Heart right ventricle (tissue), 16 donors: ENCODE measurements at regions of chr1 and their contacts with region 1.

Region 1: DNA sequence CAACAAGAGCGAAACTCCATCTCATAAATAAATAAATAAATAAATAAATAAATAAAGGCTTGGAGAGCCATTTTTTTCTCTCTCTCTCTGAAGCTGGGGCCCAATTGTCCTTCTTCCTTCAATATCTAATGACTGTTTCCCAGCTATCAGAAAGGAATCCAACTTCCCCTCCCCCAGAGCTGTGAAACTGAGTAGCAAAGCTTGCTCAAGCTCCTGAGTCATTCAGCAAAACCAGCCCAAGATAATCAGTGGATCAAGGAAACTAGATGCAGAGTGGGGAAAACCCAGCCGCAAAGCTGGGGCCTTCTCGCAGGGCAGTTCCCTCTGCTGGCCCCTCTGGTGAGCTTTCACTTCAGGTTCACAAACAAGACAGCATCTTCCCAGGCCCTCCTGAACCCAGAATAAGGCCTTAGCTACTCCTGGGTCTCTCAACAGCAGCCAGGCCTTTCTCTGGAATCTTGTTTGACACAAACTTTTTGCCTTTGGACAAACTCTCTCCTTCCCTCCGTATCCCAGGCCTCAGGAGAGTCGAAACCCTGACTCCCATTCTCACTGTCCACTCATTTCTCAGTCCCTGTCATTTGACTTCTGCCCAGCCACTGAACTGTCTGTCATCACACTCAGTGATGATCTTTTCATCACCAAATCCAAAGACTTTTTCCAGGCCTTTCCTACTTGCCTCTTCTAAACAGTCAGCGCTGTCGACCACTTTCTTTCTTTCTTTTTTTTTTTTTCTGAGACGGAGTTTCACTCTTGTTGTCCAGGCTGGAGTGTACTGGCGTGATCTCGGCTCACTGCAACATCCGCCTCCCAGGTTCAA is 18.0 kb upstream of the PTP4A2 start:
- DNase-seq: peak; percentile 54 to 83
- ATAC-seq: peak; percentile 1 to 74 (median 64)
- H3K4me3 ChIP-seq: peak overlapping the region in 1 of 10 donors; percentile 11
- H3K27ac ChIP-seq: peak overlapping the region; percentile 85 to 96 (median 94)
- H3K4me1 ChIP-seq: peaks cover 13 to 90% (median 37%) of the 10 kb centered on the region in 9 donors
- H3K27me3 ChIP-seq: no peaks in the 10 kb centered on the region
- CTCF ChIP-seq: peak in 5 of 9 donors; percentile 11 to 53 (median 44)

Region 2: GRCh38 chr1:31354283-31354682 is 601.8 kb before region 1 on chr1:
- intact Hi-C with region 1: no loop called
- DNase-seq: no peak
- ATAC-seq: no peak
- H3K4me3 ChIP-seq: no peak overlapping the region
- H3K27ac ChIP-seq: no peak overlapping the region
- H3K4me1 ChIP-seq: no peaks in the 10 kb centered on the region
- H3K27me3 ChIP-seq: no peaks in the 10 kb centered on the region
- CTCF ChIP-seq: no peak

Region 3: GRCh38 chr1:31663622-31664452 is 292.3 kb before region 1 on chr1:
- intact Hi-C with region 1: loop called in 4 of 10 experiments (anchors 10 kb)
- DNase-seq: peak; percentile 62 to 69
- ATAC-seq: peak in 7 of 8 donors; percentile 33 to 66 (median 52)
- H3K4me3 ChIP-seq: no peak overlapping the region
- H3K27ac ChIP-seq: no peak overlapping the region
- H3K4me1 ChIP-seq: peaks cover 6 to 26% (median 15%) of the 10 kb centered on the region in 9 donors
- H3K27me3 ChIP-seq: no peaks in the 10 kb centered on the region
- CTCF ChIP-seq: peak; percentile 83 to 92 (median 89)

Region 4: DNA sequence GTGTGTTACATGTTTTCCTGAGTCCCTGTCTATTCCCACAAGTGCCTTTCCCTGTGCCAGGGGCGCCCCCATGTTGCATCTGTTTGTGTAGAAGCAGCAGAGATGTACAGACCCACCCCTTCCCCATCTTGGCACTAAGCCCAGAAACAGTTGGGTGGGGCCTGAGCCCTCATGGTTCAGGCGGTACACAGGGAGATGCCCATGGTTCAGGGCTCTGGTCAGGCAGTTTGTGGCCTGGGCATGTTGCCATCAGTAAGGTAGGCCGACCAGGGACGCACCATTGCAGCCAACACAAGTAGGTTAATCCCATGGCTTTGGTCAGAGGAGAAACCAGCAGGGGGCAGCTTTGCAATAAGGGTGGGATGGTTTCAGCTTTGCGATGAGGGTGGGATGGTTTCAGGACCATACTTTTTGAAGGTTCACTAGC is 191.1 kb before region 1 on chr1:
- intact Hi-C with region 1: no loop called
- DNase-seq: no peak
- ATAC-seq: peak in 1 of 8 donors; percentile 4
- H3K4me3 ChIP-seq: no peak overlapping the region
- H3K27ac ChIP-seq: no peak overlapping the region
- H3K4me1 ChIP-seq: peaks cover 14 to 52% (median 38%) of the 10 kb centered on the region in 9 donors
- H3K27me3 ChIP-seq: peaks cover 0 to 87% (median 20%) of the 10 kb centered on the region in 7 donors
- CTCF ChIP-seq: peak in 7 of 9 donors; percentile 28 to 43 (median 34)

Region 5: GRCh38 chr1:31802190-31803150 is 153.7 kb before region 1 on chr1:
- intact Hi-C with region 1: loop called in 5 of 10 experiments (anchors 10 kb)
- DNase-seq: no peak
- ATAC-seq: no peak
- H3K4me3 ChIP-seq: peak overlapping the region in 6 of 10 donors; percentile 0 to 38 (median 20)
- H3K27ac ChIP-seq: peak overlapping the region in 1 of 10 donors; percentile 16
- H3K4me1 ChIP-seq: peaks cover 0 to 29% (median 0%) of the 10 kb centered on the region in 9 donors
- H3K27me3 ChIP-seq: peaks cover 0 to 17% (median 12%) of the 10 kb centered on the region in 7 donors
- CTCF ChIP-seq: no peak

Region 6: DNA sequence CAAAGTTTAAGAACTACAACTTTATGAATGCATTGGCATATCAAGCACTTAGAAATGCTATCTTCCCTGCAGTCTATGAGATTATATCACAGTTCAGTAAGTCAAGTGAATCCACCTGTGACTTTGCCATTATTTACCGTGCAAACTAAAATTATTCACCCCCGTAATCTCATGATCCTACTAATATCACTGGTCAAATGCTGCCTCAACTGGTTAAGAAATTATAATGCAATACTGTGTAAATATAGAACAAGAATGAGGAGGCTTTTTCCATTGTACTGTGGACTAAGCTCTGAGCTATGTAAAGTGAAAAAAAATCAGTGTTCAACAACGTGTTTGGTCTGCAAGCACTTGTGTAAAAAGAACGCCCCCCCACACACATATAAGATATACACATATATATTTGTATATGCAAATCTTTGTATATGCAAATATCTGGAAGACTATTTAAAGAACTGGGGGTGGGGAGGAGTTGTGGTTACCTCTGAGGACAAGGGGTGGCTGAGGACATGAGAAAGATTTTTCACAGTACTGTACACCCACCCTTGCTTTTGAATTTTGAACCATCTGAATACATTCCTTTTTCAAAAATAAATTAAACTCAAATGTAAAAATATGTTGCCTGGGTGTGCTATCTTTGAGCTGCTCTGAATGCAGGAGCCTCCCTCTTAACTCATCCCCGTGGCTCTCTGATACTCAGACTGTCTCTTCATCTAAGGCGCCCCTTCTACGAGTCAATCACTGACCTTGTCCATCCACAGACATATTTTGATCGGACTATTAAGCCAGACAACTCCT is 75.0 kb before region 1 on chr1:
- intact Hi-C with region 1: loop called in 1 of 10 experiments (anchors 10 kb)
- DNase-seq: no peak
- ATAC-seq: peak in 5 of 8 donors; percentile 28 to 68 (median 48)
- H3K4me3 ChIP-seq: no peak overlapping the region
- H3K27ac ChIP-seq: peak overlapping the region in 1 of 10 donors; percentile 53
- H3K4me1 ChIP-seq: peaks cover 0 to 19% (median 3%) of the 10 kb centered on the region in 9 donors
- H3K27me3 ChIP-seq: no peaks in the 10 kb centered on the region
- CTCF ChIP-seq: no peak

Region 7: GRCh38 chr1:31926853-31927660 is 29.1 kb before region 1 on chr1:
- intact Hi-C with region 1: loop called in 1 of 10 experiments (anchors 5 kb)
- DNase-seq: no peak
- ATAC-seq: peak in 1 of 8 donors; percentile 21
- H3K4me3 ChIP-seq: no peak overlapping the region
- H3K27ac ChIP-seq: peak overlapping the region in 5 of 10 donors; percentile 1 to 51 (median 8)
- H3K4me1 ChIP-seq: peaks cover 24 to 98% (median 96%) of the 10 kb centered on the region in 9 donors
- H3K27me3 ChIP-seq: no peaks in the 10 kb centered on the region
- CTCF ChIP-seq: no peak

Region 8: DNA sequence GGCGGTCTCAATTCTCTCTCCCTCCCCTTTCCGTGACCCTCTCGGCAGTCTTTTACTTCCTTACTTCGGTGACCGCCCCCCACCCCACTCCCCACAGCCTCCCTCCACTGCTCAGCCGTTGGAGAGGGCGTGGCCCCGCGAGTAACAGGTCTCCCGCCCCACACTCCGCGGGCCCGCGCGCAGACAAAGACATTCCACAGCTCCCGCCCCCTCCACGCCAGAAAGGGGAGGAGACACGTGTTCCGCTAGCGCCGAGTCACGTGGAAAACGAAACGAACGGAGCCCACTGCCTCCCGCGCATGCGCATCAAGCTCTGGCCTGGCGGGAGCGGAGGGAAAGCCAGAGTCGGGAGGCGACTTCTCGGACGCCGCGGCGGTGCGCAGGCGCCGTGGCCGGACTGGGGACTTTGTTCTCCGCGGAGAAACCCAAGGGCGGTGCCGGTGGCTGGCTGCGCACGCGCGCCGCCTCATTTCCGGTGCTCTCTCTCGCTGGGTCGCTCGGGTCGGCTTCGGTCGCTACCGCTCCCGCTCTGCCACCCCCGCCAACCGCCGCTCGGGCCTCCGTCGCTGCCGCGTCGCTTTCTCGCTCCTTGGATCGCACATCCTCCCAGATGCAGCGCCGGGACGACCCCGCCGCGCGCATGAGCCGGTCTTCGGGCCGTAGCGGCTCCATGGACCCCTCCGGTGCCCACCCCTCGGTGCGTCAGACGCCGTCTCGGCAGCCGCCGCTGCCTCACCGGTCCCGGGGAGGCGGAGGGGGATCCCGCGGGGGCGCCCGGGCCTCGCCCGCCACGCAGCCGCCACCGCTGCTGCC is 57.5 kb after region 1 on chr1 and contains the start of gene KHDRBS1:
- intact Hi-C with region 1: no loop called
- DNase-seq: peak; percentile 99
- ATAC-seq: peak; percentile 95 to 98 (median 96)
- H3K4me3 ChIP-seq: peak within 1 kb of the TSS; percentile 76 to 100 (median 96)
- H3K27ac ChIP-seq: peak within 1 kb of the TSS; percentile 93 to 100 (median 100)
- H3K4me1 ChIP-seq: peaks cover 0 to 50% (median 45%) of the 10 kb centered on the region in 9 donors
- H3K27me3 ChIP-seq: no peaks in the 10 kb centered on the region
- CTCF ChIP-seq: no peak
- total RNA-seq, gene KHDRBS1: 64.6 to 78.3 (median 67.1) TPM

Region 9: GRCh38 chr1:32031578-32032274 is 75.6 kb after region 1 on chr1:
- intact Hi-C with region 1: no loop called
- DNase-seq: no peak
- ATAC-seq: no peak
- H3K4me3 ChIP-seq: no peak overlapping the region
- H3K27ac ChIP-seq: no peak overlapping the region
- H3K4me1 ChIP-seq: peaks cover 0 to 27% (median 10%) of the 10 kb centered on the region in 9 donors
- H3K27me3 ChIP-seq: no peaks in the 10 kb centered on the region
- CTCF ChIP-seq: no peak

Region 10: DNA sequence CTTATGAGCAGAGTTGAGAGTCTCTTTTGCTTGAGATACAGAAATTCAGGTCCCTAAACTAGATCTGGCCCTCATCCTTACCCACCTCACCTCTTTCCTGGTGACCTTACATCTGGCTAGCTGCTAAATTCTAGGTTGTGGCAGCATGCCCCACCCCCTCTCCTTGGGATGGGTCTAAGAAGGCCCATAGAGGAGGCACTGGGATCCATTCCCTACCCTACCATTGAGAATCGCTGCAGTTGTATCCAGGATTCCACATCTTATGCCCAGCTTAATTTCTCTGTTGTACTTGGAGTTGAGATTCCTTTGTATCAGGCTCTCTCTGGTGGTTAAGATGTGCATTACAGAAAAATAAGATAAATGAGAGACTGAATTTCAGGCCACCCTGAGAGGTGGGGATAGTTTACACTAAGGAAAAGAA is 107.1 kb after region 1 on chr1:
- intact Hi-C with region 1: loop called in 1 of 10 experiments (anchors 10 kb)
- DNase-seq: no peak
- ATAC-seq: peak; percentile 5 to 53 (median 44)
- H3K4me3 ChIP-seq: no peak overlapping the region
- H3K27ac ChIP-seq: peak overlapping the region in 6 of 10 donors; percentile 33 to 73 (median 52)
- H3K4me1 ChIP-seq: peaks cover 8 to 32% (median 28%) of the 10 kb centered on the region in 9 donors
- H3K27me3 ChIP-seq: no peaks in the 10 kb centered on the region
- CTCF ChIP-seq: peak in 8 of 9 donors; percentile 49 to 71 (median 60)